Kidney (tissue), 22 donors: ENCODE measurements at regions of chrX and their contacts with region 1.

Region 1: GRCh38 chrX:19887911-19888879 is 795 bp upstream of the SH3KBP1 start:
- DNase-seq: peak; percentile 69 to 89 (median 83)
- H3K4me3 ChIP-seq: peak overlapping the region; percentile 50 to 61 (median 51)
- H3K27ac ChIP-seq: peak overlapping the region; percentile 71 to 75
- H3K4me1 ChIP-seq: peaks cover 0 to under 1% (median 0%) of the 10 kb centered on the region in 3 donors
- H3K27me3 ChIP-seq: no peaks in the 10 kb centered on the region
- CTCF ChIP-seq: peak; percentile 57

Region 2: GRCh38 chrX:19739683-19740082 is 148.5 kb before region 1 on chrX:
- intact Hi-C with region 1: loop called (anchors 10 kb)
- DNase-seq: peak in 4 of 5 donors; percentile 42 to 52 (median 48)
- H3K4me3 ChIP-seq: no peak overlapping the region
- H3K27ac ChIP-seq: no peak overlapping the region
- H3K4me1 ChIP-seq: no peaks in the 10 kb centered on the region
- H3K27me3 ChIP-seq: peaks cover 3% of the 10 kb centered on the region
- CTCF ChIP-seq: peak; percentile 41

Region 3: DNA sequence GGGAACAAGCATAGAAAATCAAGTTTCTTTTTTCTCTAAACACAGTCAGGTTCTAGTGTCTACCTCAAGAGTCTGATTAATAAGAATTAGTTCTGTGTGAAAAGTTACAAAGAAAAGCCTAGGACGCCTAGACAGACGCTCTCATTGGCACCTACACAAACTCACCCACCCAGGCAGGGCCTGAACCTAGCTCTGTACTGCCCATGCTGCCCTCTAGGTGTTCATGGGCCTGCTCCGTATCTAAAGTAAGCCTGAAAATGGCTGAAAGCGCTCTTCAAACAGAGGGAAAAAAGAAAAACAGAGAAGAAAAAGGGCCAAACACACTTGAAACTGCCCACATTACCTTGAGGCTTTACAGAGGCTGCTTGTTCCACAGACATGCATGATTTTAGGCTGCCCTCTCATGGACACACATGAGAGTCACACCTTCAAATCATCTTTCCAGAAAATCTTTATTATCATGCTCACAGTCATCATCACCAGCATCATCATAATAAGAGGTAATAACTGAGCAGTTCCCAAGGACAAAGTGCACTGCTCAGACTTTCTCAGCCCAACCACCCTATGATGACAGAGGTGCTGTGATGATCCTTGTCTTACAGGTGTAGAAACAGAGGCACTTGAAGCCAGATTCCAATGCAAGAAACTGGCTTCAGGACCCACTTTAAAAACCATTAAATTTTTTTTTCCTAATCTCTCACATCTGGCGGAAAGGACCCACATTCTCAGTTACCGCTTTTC is 178.9 kb after region 1 on chrX:
- intact Hi-C with region 1: no loop called
- DNase-seq: peak in 3 of 5 donors; percentile 30 to 51 (median 49)
- H3K4me3 ChIP-seq: no peak overlapping the region
- H3K27ac ChIP-seq: no peak overlapping the region
- H3K4me1 ChIP-seq: no peaks in the 10 kb centered on the region
- H3K27me3 ChIP-seq: peaks cover 8% of the 10 kb centered on the region
- CTCF ChIP-seq: peak; percentile 31

Region 4: DNA sequence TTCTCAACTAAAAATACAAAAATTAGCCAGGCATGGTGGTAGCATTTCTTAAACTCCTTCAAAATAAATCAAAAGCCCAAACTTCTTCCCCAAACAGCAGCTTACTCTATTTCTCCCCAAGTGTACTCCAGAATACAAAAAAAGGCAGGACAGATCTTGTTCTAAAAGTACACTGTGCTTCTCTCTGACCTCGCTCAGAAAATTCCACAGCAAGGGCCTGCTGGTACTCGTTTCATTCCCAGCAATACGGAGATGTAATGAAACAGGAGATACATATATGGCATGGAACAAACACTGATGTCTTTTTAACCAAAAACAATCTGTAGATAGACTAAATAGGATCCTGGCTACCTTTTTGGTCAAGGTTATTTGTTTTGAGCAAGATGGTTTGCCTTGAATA is 203.3 kb after region 1 on chrX:
- intact Hi-C with region 1: no loop called
- DNase-seq: no peak
- H3K4me3 ChIP-seq: no peak overlapping the region
- H3K27ac ChIP-seq: no peak overlapping the region
- H3K4me1 ChIP-seq: no peaks in the 10 kb centered on the region
- H3K27me3 ChIP-seq: peaks cover 3% of the 10 kb centered on the region
- CTCF ChIP-seq: no peak